CD8-positive, alpha-beta memory T cell (primary cell): ENCODE measurements at regions of chr16 and their contacts with region 1.

Region 1: DNA sequence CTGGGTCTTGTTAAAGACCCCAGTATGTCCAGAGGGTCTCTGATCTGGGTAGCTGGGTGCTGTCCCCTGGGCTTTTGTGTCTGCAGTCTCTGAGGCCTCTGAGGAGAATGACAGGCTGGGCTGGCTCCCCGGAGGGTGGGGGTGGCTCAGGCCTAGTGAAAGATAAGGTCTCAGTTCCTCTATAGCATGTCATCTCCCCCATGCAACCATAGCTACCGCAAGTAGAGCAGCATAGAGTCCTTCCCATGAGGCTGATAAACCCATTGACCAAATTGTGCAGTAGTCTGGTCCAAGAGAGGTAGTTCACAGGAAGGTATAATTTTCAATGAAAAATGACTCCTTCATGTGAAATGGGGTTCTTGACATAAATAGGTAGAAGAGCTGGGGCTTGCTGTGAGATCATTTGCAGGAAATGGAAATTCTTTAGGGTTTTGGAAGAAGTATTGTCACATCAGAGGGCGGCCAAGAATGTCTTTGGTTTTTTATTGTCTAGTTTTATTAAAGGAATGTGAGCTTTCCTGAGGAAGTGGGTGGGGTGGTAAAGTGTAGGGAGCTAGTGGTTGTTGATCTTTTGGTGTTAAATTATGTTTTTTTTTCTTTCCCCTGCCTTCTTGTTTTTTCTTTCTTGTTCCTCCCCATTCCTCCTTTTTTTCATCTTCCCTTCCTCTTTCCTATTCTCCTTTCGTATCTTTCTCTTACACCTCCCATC is 21.0 kb downstream of the SLC7A6OS start:
- DNase-seq: peak in 3 of 5 donors; percentile 40 to 57 (median 48)
- H3K4me3 ChIP-seq: peak overlapping the region; percentile 19
- H3K4me3 Mint-ChIP-seq: peak overlapping the region; percentile 18 to 71 (median 56)
- H3K27ac ChIP-seq: peak overlapping the region; percentile 35
- H3K27ac Mint-ChIP-seq: peak overlapping the region; percentile 84 to 98 (median 92)
- H3K4me1 ChIP-seq: peaks cover 82% of the 10 kb centered on the region
- H3K4me1 Mint-ChIP-seq: peaks cover 83 to 89% (median 83%) of the 10 kb centered on the region in 3 donors
- H3K27me3 ChIP-seq: no peaks in the 10 kb centered on the region
- H3K27me3 Mint-ChIP-seq: no peaks in the 10 kb centered on the region

Region 2: DNA sequence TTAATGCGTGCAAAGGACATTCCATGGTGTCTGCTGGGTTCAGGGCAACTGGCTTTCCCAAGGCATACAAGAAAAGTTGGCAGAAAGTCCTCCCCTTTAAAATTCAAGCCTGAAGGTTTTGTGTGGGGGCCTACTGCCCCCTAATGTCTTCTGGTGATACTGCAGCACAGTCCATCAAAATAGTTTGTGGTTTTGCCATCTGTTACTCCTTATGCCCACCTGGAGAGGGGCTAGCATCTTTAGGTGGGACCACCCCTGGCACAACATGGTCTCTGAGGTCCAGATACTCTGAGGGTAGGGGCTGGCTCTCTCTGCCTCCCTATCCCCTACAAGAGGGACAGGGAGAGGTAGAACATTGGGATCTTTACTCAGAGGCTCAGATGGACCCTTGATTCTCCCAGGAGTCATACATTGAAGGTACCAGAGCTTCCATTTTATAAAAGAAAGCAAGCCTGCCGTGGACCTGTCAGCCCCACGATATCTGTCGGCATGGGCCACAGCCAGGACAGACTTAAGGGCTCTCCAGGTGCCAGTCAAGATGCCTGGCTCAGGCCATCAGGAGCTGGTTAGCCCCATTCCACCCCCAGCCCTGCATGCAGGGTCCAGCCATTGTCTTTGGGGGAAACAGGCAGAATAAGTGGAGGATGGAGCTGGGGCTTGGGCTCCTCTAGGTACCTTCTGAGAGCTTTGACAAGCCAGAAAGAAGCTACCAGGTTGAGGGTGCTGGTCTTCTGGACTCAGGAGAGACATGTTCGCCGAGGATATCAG is 60.2 kb before region 1 on chr16:
- CTCF ChIA-PET with region 1: no interaction called
- POLR2A ChIA-PET with region 1: no interaction called
- DNase-seq: peak in 4 of 5 donors; percentile 40 to 61 (median 48)
- H3K4me3 ChIP-seq: no peak overlapping the region
- H3K4me3 Mint-ChIP-seq: peak overlapping the region in 1 of 7 donors; percentile 27
- H3K27ac ChIP-seq: no peak overlapping the region
- H3K27ac Mint-ChIP-seq: peak overlapping the region; percentile 32 to 93 (median 74)
- H3K4me1 ChIP-seq: peaks cover 32% of the 10 kb centered on the region
- H3K4me1 Mint-ChIP-seq: peaks cover 26 to 45% (median 42%) of the 10 kb centered on the region in 3 donors
- H3K27me3 ChIP-seq: no peaks in the 10 kb centered on the region
- H3K27me3 Mint-ChIP-seq: peaks cover 0 to 4% of the 10 kb centered on the region in 2 donors

Region 3: DNA sequence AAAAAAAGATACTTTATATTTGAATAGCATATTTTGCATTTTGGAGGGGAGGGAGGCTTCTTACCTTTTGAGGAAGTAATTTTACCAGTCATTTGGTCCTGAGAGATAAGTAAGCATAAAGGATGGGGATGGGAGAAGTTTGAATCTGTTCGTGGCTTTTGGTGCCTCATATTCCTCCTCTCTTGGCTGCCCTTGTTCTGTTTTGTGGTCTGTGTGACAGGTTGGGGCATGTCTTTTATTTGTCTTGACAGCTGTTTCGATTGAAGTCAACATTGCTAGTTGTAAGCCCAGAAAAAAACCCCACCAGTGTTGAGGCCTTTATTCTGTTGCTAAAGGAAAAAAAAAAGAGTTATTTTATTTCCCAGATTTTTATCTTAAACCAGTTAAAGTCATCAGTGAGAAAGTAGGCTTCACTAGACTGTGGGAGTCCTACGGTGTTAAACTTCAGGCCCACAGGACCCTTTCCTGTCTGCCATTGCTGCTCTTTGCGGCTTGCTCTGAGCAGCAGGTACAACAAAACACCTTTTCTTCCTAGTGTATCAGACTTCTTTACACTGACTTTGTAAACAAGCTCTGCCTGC is 14.1 kb before region 1 on chr16:
- CTCF ChIA-PET with region 1: interaction called, 19 read pairs
- POLR2A ChIA-PET with region 1: interaction called, 9 read pairs
- DNase-seq: peak; percentile 19 to 85 (median 63)
- H3K4me3 ChIP-seq: peak overlapping the region; percentile 42
- H3K4me3 Mint-ChIP-seq: peak overlapping the region; percentile 36 to 80 (median 74)
- H3K27ac ChIP-seq: no peak overlapping the region
- H3K27ac Mint-ChIP-seq: peak overlapping the region; percentile 89 to 99 (median 96)
- H3K4me1 ChIP-seq: peaks cover 81% of the 10 kb centered on the region
- H3K4me1 Mint-ChIP-seq: peaks cover 58 to 72% (median 72%) of the 10 kb centered on the region in 3 donors
- H3K27me3 ChIP-seq: no peaks in the 10 kb centered on the region
- H3K27me3 Mint-ChIP-seq: peaks cover 0 to 2% of the 10 kb centered on the region in 2 donors

Region 4: GRCh38 chr16:68310761-68311511 is 21.2 kb after region 1 on chr16 and contains the starts of genes PRMT7 and SLC7A6OS:
- CTCF ChIA-PET with region 1: interaction called, 10 read pairs
- POLR2A ChIA-PET with region 1: interaction called, 8 read pairs
- DNase-seq: peak; percentile 90 to 94 (median 92)
- H3K4me3 ChIP-seq: peak within 1 kb of the TSS; percentile 95
- H3K4me3 Mint-ChIP-seq: peak within 1 kb of the TSS; percentile 90 to 99 (median 98)
- H3K27ac ChIP-seq: peak within 1 kb of the TSS; percentile 83
- H3K27ac Mint-ChIP-seq: peak within 1 kb of the TSS; percentile 92 to 98 (median 98)
- H3K4me1 ChIP-seq: peaks cover 43% of the 10 kb centered on the region
- H3K4me1 Mint-ChIP-seq: peaks cover 44 to 63% (median 53%) of the 10 kb centered on the region in 3 donors
- H3K27me3 ChIP-seq: no peaks in the 10 kb centered on the region
- H3K27me3 Mint-ChIP-seq: no peaks in the 10 kb centered on the region
- total RNA-seq, gene PRMT7: 61.1 to 67.5 TPM
- total RNA-seq, gene SLC7A6OS: 21.8 to 25.5 TPM